ENCODE measurements at regions of chr1 and their contacts with region 1.

Region 1: GRCh38 chr1:234544087-234544579 is 65.2 kb upstream of the TARBP1 start:
- DNase-seq: peak; percentile 45 to 92 (median 58)
- ATAC-seq: peak; percentile 61
- H3K4me3 ChIP-seq: no peak overlapping the region
- H3K27ac ChIP-seq: peak overlapping the region; percentile 72
- H3K4me1 ChIP-seq: peaks cover 30 to 53% of the 10 kb centered on the region in 2 experiments
- H3K27me3 ChIP-seq: no peaks in the 10 kb centered on the region
- CTCF ChIP-seq: no peak
- EP300 ChIP-seq: peak; percentile 12; the same call in 1 of the 2 replicates
- POLR2A ChIP-seq: no peak
- RAD21 ChIP-seq: no peak

Region 2: DNA sequence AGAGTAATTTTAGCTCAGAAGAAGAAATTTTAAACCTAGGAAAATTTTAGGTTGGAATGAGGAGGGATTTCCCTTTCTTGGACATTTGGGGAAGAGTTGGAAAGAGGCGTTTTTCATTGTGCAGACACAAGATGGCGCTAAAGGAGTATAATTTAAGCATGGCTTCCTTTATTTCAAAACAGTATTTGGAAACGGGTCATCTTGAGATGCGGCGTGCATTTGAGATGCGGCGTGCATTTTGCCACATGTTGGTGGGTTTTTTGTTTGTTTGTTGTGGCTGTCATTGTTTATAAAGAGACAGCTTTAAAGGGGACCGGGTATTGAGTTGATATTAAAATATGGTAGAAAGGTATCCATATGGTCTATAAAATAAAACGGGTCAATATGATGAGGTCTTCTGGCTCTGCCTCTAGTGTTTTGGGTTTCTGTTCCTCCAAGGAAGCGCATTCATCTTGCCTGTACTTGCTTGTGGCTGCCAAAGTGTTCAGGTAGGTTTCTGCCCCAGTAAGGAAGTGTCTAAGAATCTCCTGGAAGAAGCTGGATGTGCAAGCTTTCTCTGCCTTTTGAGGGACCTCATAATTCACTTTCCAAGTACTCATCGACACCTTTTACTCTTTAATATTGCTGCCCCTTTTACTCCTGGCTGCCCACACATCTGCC is 429.4 kb before region 1 on chr1:
- CTCF ChIA-PET with region 1: no interaction called
- POLR2A ChIA-PET with region 1: no interaction called
- in situ Hi-C with region 1: no loop called
- intact Hi-C with region 1: no loop called
- DNase-seq: peak; percentile 35 to 57 (median 41)
- ATAC-seq: peak; percentile 76
- H3K4me3 ChIP-seq: no peak overlapping the region
- H3K27ac ChIP-seq: no peak overlapping the region
- H3K4me1 ChIP-seq: 0 out of 5 replicates have a peak, but pooled peaks cover 0 to 3% of the 10 kb centered on the region in 2 experiments
- H3K27me3 ChIP-seq: peaks cover 7 to 22% of the 10 kb centered on the region in 2 experiments; a peak in 4 of 5 replicates
- CTCF ChIP-seq: peak; percentile 59 to 86 (median 75)
- EP300 ChIP-seq: no peak
- POLR2A ChIP-seq: no peak
- RAD21 ChIP-seq: peak; percentile 65 to 73

Region 3: DNA sequence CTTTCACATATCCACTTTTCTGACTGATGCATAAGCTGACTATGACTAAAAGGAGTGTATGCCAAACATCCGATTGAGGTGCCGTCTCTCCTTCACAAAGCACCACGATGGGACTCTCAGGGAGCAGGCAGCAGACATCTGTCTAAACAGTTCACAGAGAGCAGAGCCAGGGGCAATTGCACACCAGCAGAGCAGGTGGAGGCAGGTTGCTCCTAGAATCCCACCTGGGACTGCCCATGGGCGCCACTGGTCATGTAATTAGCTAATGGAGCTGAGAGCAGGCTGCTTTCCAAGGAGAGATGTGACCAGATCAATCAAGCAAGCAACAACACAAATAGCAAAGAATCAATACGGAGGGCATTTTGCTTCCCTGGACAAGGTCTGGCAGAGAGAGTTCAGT is 201.4 kb before region 1 on chr1:
- CTCF ChIA-PET with region 1: no interaction called
- POLR2A ChIA-PET with region 1: no interaction called
- in situ Hi-C with region 1: no loop called
- intact Hi-C with region 1: no loop called
- DNase-seq: no peak
- ATAC-seq: no peak
- H3K4me3 ChIP-seq: no peak overlapping the region
- H3K27ac ChIP-seq: no peak overlapping the region
- H3K4me1 ChIP-seq: no peaks in the 10 kb centered on the region
- H3K27me3 ChIP-seq: no peaks in the 10 kb centered on the region; a peak in 1 of 5 replicates
- CTCF ChIP-seq: no peak
- EP300 ChIP-seq: no peak
- POLR2A ChIP-seq: no peak
- RAD21 ChIP-seq: no peak

Region 4: GRCh38 chr1:234505775-234506114 is 38.4 kb before region 1 on chr1:
- CTCF ChIA-PET with region 1: no interaction called
- POLR2A ChIA-PET with region 1: no interaction called
- in situ Hi-C with region 1: no loop called
- intact Hi-C with region 1: loop called (anchors 2 kb)
- DNase-seq: no peak
- ATAC-seq: no peak
- H3K4me3 ChIP-seq: no peak overlapping the region
- H3K27ac ChIP-seq: no peak overlapping the region
- H3K4me1 ChIP-seq: peaks cover 0 to 16% of the 10 kb centered on the region in 2 experiments; a peak in 3 of 5 replicates
- H3K27me3 ChIP-seq: no peaks in the 10 kb centered on the region
- CTCF ChIP-seq: no peak
- EP300 ChIP-seq: no peak
- POLR2A ChIP-seq: no peak
- RAD21 ChIP-seq: no peak

Region 5: DNA sequence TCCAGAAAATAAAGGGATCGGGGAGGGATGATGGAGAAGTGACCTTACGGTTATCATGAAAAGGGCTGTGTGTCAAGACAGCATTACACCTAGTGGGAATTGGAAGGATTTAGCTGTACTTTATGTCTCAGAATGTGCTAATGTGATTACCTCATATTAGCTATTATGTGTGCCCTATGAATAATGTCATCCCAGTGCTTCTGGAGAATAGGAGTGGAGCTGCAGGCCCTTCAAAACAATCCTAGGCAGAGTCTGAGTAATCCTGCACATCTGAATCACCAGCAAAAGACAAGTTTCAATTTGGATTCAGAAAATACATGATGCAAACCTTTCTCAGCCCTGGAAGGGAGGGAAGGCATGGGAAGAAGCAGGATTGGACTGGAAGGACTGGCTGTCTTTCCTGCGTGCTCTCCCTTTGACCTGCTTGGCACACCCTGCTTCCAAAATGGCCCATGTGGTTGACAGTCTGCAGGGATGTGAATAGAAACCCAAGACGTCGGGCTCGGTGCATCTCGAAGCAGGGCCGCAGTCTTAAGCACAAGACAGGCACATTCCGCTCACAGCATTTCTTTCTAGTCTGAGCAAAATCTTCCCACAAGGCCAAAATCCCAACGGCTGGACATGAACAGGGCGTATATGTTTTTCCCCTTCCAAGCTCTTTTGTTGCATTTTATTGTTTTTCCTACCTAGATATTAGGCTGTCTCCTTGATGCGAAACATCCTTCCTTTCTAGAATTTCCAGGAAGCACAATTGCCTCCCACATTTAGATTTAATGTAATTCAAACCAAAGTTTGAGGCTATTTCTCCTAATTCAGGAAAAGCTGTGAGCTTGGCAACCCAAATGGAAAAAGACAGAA is 10.9 kb before region 1 on chr1:
- CTCF ChIA-PET with region 1: no interaction called
- POLR2A ChIA-PET with region 1: interaction called, 11 read pairs
- in situ Hi-C with region 1: no loop called
- intact Hi-C with region 1: no loop called
- DNase-seq: no peak
- ATAC-seq: no peak
- H3K4me3 ChIP-seq: no peak overlapping the region
- H3K27ac ChIP-seq: no peak overlapping the region
- H3K4me1 ChIP-seq: peaks cover 6 to 21% of the 10 kb centered on the region in 2 experiments
- H3K27me3 ChIP-seq: no peaks in the 10 kb centered on the region
- CTCF ChIP-seq: no peak
- EP300 ChIP-seq: no peak
- POLR2A ChIP-seq: no peak
- RAD21 ChIP-seq: no peak

Region 6: GRCh38 chr1:234559152-234559901 is 15.2 kb after region 1 on chr1:
- CTCF ChIA-PET with region 1: no interaction called
- POLR2A ChIA-PET with region 1: interaction called, 37 read pairs
- in situ Hi-C with region 1: no loop called
- intact Hi-C with region 1: loop called (anchors 1 kb)
- DNase-seq: no peak
- ATAC-seq: no peak
- H3K4me3 ChIP-seq: no peak overlapping the region
- H3K27ac ChIP-seq: no peak overlapping the region
- H3K4me1 ChIP-seq: peaks cover 19 to 37% of the 10 kb centered on the region in 2 experiments
- H3K27me3 ChIP-seq: no peaks in the 10 kb centered on the region
- CTCF ChIP-seq: no peak
- EP300 ChIP-seq: no peak
- POLR2A ChIP-seq: no peak
- RAD21 ChIP-seq: no peak

Region 7: GRCh38 chr1:234579967-234580366 is 35.8 kb after region 1 on chr1:
- CTCF ChIA-PET with region 1: no interaction called
- POLR2A ChIA-PET with region 1: no interaction called
- in situ Hi-C with region 1: no loop called
- intact Hi-C with region 1: loop called (anchors 5 kb)
- DNase-seq: peak; percentile 49 to 69 (median 60)
- ATAC-seq: peak; percentile 61
- H3K4me3 ChIP-seq: no peak overlapping the region
- H3K27ac ChIP-seq: no peak overlapping the region
- H3K4me1 ChIP-seq: peaks cover 7 to 28% of the 10 kb centered on the region in 2 experiments
- H3K27me3 ChIP-seq: no peaks in the 10 kb centered on the region
- CTCF ChIP-seq: peak; percentile 34 to 57 (median 52); a peak in 5 of 6 replicates
- EP300 ChIP-seq: no peak
- POLR2A ChIP-seq: no peak
- RAD21 ChIP-seq: peak; percentile 34 to 68

Measured in K562 (cell line).